ENCODE measurements at regions of chr9 and their contacts with region 1.

Region 1: DNA sequence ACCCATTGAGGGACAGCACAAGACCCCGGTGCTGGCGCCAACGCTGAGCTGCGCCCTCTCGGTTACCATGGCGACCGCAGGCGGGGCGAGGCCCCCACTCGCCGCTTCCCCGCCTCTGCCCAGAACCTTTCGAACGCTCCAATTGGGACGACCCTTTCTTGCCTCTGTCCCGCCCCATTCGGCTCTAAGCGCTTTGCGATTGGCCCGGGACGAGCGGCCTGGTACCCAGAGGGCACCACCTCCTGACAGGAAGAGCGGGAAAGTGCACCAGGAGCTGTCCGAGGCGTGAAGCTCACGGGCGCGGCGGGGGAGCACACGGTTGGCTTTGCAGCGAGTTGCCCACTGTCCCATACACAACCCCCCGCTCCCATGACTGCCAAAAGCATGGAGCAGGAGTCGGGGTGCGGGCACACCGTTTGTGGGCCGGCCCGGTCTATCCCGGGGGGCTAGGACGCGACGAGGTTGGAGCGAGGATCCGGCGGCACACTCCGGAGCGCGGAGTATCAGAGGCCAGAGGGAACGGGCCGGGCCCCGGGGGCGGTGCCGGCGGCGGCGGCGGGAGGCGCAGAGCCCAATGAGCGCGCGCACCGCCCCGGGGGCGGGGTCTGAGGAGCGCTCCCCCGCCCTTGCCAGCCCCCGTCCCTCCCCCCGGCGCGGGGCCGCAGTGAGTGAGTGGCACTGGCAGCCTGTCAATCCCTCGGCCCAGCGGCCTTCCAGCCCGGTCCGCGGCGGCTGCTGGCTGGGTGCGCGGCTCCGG is 978 bp upstream of the PBX3 start:
- DNase-seq: peak; percentile 96
- H3K4me3 ChIP-seq: peak overlapping the region in 2 of 3 experiments; percentile 38 to 92
- H3K27ac ChIP-seq: peak overlapping the region; percentile 9
- H3K4me1 ChIP-seq: peaks cover 24% of the 10 kb centered on the region
- H3K27me3 ChIP-seq: peaks cover 3 to 4% of the 10 kb centered on the region in 2 experiments
- CTCF ChIP-seq: no peak
- POLR2A ChIP-seq: peak; percentile 72

Region 2: DNA sequence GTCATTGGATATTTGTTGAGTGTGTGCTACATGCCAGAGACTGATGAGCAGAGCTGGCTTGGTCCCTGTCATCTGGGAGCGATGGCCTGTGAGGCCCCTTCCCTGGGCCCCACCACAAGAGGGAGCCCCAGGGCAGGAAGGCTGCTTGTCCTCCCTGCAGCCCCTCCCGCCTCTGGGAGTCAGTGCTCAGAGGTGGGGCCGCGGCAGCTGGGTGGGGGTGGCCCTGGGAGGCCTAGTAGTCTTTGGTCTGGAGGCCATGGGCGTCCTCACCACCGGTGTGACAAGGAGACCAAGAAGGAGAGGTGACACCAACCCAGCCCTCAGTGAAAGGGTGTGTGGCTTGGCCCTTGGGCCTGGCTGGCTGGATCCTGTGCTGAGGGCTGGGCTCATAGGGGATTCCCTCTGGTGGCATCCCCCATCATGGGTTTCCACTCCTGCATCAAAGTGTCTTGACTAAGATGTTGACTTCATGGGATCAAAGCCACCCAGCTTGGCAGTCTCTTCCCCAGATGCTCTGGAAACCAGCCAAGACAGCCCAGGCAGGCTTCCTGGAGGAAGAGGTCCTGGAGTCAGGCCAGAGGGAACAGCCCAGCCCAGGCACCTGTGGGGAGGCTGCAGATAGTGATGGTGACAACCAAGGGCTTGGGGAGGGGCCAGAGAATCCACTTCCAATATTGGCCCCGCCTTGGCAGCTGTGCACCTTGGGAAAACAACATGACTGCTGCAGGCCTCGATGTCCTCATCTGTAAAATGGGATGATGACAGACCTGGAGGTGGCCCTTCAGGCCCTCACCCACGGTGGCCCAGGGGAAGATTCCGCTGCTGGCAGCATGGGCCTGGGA is 317.9 kb before region 1 on chr9:
- CTCF ChIA-PET with region 1: no interaction called
- POLR2A ChIA-PET with region 1: no interaction called
- dilution Hi-C with region 1: no loop called
- intact Hi-C with region 1: loop called (anchors 1 kb)
- DNase-seq: no peak
- H3K4me3 ChIP-seq: no peak overlapping the region
- H3K27ac ChIP-seq: no peak overlapping the region
- H3K4me1 ChIP-seq: no peaks in the 10 kb centered on the region
- H3K27me3 ChIP-seq: no peaks in the 10 kb centered on the region
- CTCF ChIP-seq: peak; percentile 24 to 55
- POLR2A ChIP-seq: no peak

Region 3: DNA sequence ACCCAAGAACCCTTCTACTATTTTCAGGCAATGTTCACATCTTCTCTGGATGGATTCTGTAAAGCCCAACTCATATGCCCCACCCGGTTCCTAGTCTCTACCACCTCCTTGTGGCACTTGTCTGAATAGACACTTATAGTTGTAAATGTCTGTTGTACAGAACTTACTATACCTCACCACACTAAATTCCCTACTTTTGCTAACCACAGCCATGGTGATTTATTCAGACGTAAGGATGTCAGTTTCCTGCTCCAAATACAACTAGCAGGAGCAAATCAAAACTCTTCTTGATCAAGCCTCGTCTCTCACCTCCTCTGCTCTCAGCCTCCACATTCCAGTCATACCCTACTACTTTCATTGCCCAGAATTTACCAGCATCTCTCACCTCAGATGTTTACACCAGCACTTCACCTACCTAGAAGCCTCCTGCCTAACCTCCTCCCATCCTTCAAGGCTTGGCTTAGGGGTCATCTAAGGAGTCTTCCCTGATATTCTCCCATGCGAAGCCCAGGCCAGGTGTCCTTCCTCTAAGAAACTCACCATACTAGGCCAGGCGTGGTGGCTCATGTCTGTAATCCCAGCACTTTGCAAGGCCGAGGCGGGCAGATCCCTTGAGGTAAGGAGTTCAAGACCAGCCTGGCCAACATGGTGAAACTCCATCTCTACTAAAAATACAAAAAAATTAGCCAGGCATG is 114.7 kb before region 1 on chr9:
- CTCF ChIA-PET with region 1: interaction called, 3 read pairs
- POLR2A ChIA-PET with region 1: no interaction called
- dilution Hi-C with region 1: no loop called
- intact Hi-C with region 1: loop called (anchors 1 kb)
- DNase-seq: peak; percentile 73
- H3K4me3 ChIP-seq: no peak overlapping the region
- H3K27ac ChIP-seq: peak overlapping the region; percentile 32
- H3K4me1 ChIP-seq: peaks cover 29% of the 10 kb centered on the region
- H3K27me3 ChIP-seq: no peaks in the 10 kb centered on the region
- CTCF ChIP-seq: peak; percentile 62 to 65
- POLR2A ChIP-seq: no peak

Region 4: GRCh38 chr9:125674981-125675973 is 70.9 kb before region 1 on chr9:
- CTCF ChIA-PET with region 1: no interaction called
- POLR2A ChIA-PET with region 1: no interaction called
- dilution Hi-C with region 1: no loop called
- intact Hi-C with region 1: loop called (anchors 1 kb)
- DNase-seq: peak; percentile 89
- H3K4me3 ChIP-seq: peak overlapping the region in 1 of 3 experiments; percentile 19
- H3K27ac ChIP-seq: peak overlapping the region; percentile 95
- H3K4me1 ChIP-seq: peaks cover 29% of the 10 kb centered on the region
- H3K27me3 ChIP-seq: no peaks in the 10 kb centered on the region
- CTCF ChIP-seq: no peak
- POLR2A ChIP-seq: no peak

Region 5: DNA sequence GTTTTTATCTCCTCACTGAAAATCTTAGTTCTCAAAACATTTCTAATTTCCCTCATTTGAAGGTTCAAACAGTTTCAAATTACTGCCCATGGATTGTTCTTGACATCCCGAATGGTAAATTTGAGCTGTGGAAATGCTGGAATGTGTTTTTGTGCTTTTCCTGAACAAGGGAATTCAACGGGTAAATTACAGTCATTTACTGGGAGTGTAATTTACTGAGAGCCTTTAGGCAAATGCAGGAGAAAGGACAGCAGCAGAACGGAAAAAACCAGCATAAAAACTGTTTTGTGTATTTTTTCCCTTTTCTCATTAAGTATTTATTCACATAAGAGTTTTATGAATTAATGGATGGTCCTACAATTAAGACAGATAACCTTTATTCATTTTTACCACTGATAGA is 140.2 kb after region 1 on chr9:
- CTCF ChIA-PET with region 1: no interaction called
- POLR2A ChIA-PET with region 1: no interaction called
- dilution Hi-C with region 1: no loop called
- intact Hi-C with region 1: loop called (anchors 1 kb)
- DNase-seq: no peak
- H3K4me3 ChIP-seq: no peak overlapping the region
- H3K27ac ChIP-seq: no peak overlapping the region
- H3K4me1 ChIP-seq: peaks cover 13% of the 10 kb centered on the region
- H3K27me3 ChIP-seq: no peaks in the 10 kb centered on the region
- CTCF ChIP-seq: no peak
- POLR2A ChIP-seq: no peak